ENCODE measurements at regions of chr1 and their contacts with region 1.

Region 1: DNA sequence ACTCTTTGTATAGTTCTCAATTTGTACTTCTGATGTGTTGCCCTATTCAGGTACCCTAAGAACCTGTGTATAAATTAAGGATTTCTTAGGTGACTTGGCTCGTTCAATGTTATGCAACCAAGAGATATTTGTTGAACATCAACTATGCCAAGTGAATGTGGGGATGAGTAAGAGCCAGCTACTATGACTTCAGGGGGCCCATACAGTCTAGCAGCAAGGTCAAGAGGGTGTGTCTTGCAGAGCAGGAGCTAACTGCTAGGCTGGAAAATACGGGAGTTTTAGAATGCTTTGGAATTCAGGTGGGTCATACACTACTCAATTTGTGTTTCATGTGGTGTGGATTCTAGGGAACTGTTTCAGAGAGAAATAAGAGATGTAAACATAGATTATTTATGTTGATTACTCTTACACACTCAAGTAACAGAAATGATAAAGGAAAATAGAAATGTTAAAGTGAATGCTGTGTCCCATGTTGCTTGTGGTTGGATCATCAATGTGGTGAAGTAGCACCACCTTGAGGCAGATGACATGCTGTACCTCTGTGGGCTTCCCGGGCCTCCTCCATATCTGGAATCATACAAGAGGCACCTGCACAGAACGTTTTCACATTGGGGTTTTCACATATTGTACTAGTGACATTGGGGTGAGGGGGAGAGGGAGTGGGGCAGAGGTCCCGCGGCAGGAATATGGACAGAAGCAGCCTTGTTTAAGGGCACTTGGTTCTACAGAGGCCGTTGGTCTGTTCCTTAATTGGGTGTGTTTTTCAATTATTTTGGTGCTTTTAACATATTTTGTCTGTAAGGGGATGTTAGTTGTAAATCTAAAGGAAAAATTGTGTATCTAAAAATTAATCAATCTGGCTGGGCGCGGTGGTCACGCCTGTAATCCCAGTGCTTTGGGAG is 12.4 kb downstream of the ARPC5 start:
- DNase-seq: peak; percentile 74
- H3K4me3 Mint-ChIP-seq: no peak overlapping the region
- H3K27ac Mint-ChIP-seq: no peak overlapping the region
- H3K4me1 Mint-ChIP-seq: peaks cover 21% of the 10 kb centered on the region
- H3K27me3 Mint-ChIP-seq: no peaks in the 10 kb centered on the region
- CTCF ChIP-seq: peak; percentile 62

Region 2: DNA sequence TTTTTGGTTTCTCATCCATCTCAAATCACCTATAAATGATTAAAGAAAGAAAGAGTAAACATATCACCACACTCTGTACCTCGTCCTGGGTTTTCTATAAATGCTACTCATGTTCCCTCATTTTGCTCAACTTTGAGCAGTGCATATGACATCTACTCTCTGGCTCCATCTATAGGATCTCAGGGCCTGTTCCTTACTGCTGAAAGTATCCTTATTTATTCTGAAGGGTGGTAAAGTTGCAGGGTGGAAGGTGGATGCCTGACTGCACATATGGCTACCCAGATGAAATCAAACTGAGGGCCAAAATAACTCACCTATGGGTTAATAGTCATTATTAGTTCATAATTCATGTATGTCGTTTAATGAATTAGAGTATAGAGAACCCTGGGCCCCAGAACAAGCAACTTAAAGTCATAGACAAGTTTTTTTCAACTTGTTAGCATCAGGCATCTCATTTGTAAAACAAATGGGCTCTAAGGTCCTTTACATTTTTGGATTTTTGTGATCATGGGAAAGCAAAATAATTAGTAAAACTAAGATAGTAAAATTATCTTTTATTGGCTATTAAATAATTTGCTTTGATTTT is 79.4 kb before region 1 on chr1:
- CTCF ChIA-PET with region 1: interaction called, 3 read pairs
- intact Hi-C with region 1: loop called (anchors 1 kb)
- DNase-seq: peak; percentile 52
- H3K4me3 Mint-ChIP-seq: no peak overlapping the region
- H3K27ac Mint-ChIP-seq: peak overlapping the region; percentile 40
- H3K4me1 Mint-ChIP-seq: peaks cover 24% of the 10 kb centered on the region
- H3K27me3 Mint-ChIP-seq: no peaks in the 10 kb centered on the region
- CTCF ChIP-seq: peak; percentile 64